ENCODE measurements at regions of chr20 and their contacts with region 1.

Region 1: DNA sequence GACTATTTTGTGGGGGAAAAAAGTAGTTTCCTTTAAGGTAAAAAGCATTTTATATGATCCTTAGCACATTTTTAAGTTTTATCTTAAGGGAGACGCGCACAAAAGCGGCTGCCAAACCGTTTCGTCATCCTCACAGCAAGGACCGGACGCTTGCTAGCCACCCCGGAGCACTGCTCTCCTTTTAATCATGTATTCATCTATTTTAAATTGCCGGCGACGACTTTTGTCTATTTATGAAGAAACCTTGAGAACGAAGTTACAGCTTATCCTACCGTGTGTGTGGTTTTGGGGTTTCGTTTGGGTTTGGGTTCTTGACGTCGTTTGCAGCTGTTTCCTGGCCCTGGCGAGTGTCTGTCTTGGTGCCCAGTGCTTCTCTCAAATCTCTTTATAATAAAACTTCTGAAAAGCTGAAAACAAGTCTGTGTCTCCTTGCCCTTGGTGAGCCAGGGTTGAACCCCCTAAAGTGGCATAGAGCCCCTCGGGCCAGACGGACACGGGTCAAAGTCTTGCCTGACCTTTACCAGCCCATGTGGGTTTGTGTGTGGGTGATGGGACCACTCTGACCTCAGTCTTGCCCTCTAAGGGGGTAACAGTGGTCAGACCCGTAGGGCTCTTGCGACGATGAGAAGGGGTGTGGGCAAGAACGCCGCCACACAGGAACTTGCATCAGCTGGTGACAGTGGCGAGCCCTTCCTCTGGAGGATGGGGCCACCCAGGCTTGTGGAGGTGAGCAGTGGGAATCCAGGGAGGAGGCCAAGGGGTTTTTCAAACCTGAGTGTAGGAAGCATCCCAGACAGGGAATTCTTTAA is 117.6 kb downstream of the JPH2 start:
- DNase-seq: no peak
- ATAC-seq: peak; percentile 40

Region 2: DNA sequence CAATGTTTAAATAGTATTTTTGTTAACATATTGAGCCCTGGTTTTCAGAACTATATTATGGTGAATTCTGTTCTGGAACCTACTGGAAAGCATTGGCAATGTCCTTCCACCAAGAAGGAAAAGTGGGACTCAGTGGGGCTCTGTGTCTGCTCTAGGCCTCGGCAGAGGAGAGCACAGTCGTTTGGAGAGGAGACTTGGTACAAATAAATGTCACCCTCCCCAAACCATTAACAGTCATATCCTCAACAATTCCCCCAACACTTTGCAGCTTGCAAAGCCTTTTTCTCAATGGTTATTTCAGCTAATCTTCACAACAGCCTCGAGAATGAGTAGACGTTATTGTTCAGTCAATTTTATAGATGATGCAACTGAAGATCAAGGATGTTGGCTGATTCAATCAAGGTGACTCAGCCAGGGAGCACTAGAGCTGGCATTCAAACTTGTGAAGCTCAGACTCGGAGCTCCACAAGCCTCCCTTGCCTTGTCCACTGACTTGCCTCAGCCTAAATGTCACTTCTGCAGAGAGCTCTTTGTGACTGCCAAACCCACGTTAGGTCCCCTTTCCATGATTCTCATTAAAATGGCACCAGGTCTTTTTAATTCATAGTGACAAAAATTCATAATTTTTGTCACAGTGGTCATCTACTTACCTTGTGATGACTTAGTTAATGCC is 94.2 kb before region 1 on chr20:
- intact Hi-C with region 1: loop called in 1 of 2 experiments (anchors 10 kb)
- DNase-seq: no peak
- ATAC-seq: no peak

Region 3: GRCh38 chr20:44170816-44171410 is 101.5 kb after region 1 on chr20:
- intact Hi-C with region 1: no loop called
- DNase-seq: no peak
- ATAC-seq: no peak